Caco-2 (cell line): ENCODE measurements at regions of chr16 and their contacts with region 1.

Region 1: DNA sequence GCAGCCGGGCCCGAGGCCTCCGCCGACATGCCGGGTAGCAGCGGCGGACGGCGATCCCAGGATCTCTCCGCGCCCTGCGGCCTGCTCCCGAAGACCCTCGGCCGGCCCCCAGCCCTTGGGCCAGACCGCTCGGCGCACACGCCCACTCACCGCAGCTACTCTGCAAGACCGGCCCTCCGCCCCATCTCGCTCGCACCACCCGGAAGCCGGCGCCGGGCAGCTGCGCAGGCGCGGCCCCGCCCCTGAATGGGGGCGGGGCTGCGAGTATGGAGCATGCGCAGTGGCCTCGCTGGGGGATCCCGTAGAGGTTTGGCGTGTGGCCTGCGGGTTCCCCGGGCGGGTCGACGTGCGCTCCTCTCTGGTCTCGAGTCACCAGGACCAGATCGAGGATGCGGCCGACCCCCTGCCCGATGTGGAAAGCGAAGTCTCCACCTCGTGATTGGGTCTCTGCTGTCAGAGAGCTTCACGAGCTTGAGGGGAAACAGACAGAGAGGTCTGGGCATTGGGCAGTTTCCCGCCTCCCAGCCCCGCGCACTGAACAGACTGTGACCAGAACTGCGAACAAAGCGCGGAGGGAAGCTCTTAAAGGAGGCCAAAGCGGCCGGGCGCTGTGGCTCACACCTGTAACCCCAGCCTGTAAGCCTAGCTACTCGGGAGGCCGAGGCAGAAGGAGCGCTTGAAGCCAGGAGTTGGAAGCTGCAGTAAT is at the start of gene KCTD13:
- DNase-seq: peak; percentile 82 to 93
- H3K4me3 ChIP-seq: peak within 1 kb of the TSS; percentile 97
- H3K4me3 Mint-ChIP-seq: peak within 1 kb of the TSS; percentile 94
- H3K27ac Mint-ChIP-seq: peak within 1 kb of the TSS; percentile 89
- H3K4me1 ChIP-seq: peaks cover 15% of the 10 kb centered on the region
- H3K4me1 Mint-ChIP-seq: peaks cover 23% of the 10 kb centered on the region
- H3K27me3 ChIP-seq: no peaks in the 10 kb centered on the region
- H3K27me3 Mint-ChIP-seq: no peaks in the 10 kb centered on the region
- CTCF ChIP-seq: no peak
- total RNA-seq, gene KCTD13: 13.0 and 14.9 TPM in 2 replicates

Region 2: GRCh38 chr16:29862884-29863668 is 63.1 kb before region 1 on chr16 and contains the start of gene CDIPT:
- CTCF ChIA-PET with region 1: no interaction called
- POLR2A ChIA-PET with region 1: no interaction called
- intact Hi-C with region 1: loop called (anchors 2 kb)
- DNase-seq: peak; percentile 92 to 96
- H3K4me3 ChIP-seq: peak within 1 kb of the TSS; percentile 80
- H3K4me3 Mint-ChIP-seq: peak within 1 kb of the TSS; percentile 93
- H3K27ac Mint-ChIP-seq: peak within 1 kb of the TSS; percentile 100
- H3K4me1 ChIP-seq: peaks cover 6% of the 10 kb centered on the region; the same call in 1 of the 2 replicates
- H3K4me1 Mint-ChIP-seq: peaks cover 6% of the 10 kb centered on the region
- H3K27me3 ChIP-seq: no peaks in the 10 kb centered on the region
- H3K27me3 Mint-ChIP-seq: no peaks in the 10 kb centered on the region
- CTCF ChIP-seq: peak; percentile 13 to 66
- total RNA-seq, gene CDIPT: 56.6 and 57.1 TPM in 2 replicates

Region 3: GRCh38 chr16:29900102-29900887 is 25.9 kb before region 1 on chr16 and contains the start of gene ASPHD1:
- CTCF ChIA-PET with region 1: interaction called, 7 read pairs
- POLR2A ChIA-PET with region 1: interaction called, 12 read pairs
- intact Hi-C with region 1: no loop called
- DNase-seq: peak; percentile 73 to 83
- H3K4me3 ChIP-seq: peak within 1 kb of the TSS; percentile 66
- H3K4me3 Mint-ChIP-seq: peak within 1 kb of the TSS; percentile 93
- H3K27ac Mint-ChIP-seq: peak within 1 kb of the TSS; percentile 88
- H3K4me1 ChIP-seq: peaks cover 22% of the 10 kb centered on the region; the same call in 1 of the 2 replicates
- H3K4me1 Mint-ChIP-seq: peaks cover 22% of the 10 kb centered on the region
- H3K27me3 ChIP-seq: no peaks in the 10 kb centered on the region
- H3K27me3 Mint-ChIP-seq: no peaks in the 10 kb centered on the region
- CTCF ChIP-seq: no peak
- total RNA-seq, gene ASPHD1: 13.2 and 14.7 TPM in 2 replicates

Region 4: DNA sequence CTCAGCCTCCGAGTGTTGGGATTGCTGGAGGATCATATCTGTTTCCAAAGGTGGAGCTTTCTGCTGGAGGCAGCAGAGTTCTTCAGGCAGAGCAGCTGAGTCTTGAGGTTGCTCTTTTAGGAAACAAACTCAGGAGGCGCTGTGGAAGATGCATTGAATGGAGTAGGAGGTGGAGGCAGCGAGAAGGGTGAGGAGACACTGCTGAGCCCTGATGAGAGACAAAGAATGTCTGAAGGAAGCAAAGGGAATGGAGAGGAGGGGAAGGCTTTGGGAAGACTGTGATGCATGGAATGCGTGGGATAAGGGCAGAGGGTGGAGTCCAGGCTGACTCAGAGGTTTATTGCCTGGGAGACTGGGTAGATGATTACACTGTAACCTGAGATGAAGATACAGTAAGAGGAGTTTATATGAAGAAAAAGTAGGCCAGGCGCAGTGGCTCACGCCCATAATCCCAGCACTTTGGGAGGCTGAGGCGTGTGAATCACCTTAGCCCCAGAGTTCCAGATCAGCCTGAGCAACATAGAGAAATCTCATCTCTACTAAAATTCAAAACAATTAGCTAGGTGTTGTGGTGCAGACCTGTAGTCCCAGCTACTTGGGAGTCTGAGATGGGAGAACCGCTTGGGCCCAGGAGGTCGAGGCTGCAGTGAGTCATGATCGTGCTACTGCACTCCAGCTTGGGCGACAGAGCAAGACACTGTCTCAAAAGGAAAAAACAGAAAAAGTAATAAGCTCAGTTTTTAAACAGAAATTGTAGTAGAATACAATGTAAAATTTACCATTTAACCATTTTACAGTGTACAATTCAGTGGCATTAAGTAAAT is 17.9 kb after region 1 on chr16:
- CTCF ChIA-PET with region 1: interaction called, 10 read pairs
- POLR2A ChIA-PET with region 1: interaction called, 5 read pairs
- intact Hi-C with region 1: no loop called
- DNase-seq: peak; percentile 86 to 94
- H3K4me3 ChIP-seq: no peak overlapping the region
- H3K4me3 Mint-ChIP-seq: peak overlapping the region; percentile 45
- H3K27ac Mint-ChIP-seq: peak overlapping the region; percentile 74
- H3K4me1 ChIP-seq: peaks cover 31% of the 10 kb centered on the region
- H3K4me1 Mint-ChIP-seq: peaks cover 18% of the 10 kb centered on the region
- H3K27me3 ChIP-seq: no peaks in the 10 kb centered on the region
- H3K27me3 Mint-ChIP-seq: no peaks in the 10 kb centered on the region
- CTCF ChIP-seq: peak in 1 of 2 experiments; percentile 38

Region 5: DNA sequence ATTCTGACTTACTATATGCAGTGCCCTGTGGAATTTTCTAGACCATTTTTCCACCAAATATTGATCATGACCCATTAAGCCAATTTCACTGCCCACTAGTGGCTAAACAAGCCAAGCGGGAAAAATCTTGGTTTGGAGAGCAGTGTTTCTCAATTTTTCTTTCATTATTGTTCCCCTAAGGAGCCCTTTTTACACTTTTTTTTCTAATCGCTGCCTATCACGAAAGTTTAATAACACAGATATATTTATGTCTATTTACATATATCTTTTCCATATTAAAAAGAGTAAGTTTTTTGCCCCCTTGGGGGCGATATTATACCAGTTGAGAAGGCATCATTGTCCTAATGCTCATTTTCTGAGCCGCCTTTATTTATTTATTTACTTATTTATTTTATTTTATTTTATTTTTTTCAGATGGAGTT is 115.7 kb after region 1 on chr16:
- CTCF ChIA-PET with region 1: no interaction called
- POLR2A ChIA-PET with region 1: no interaction called
- intact Hi-C with region 1: no loop called
- DNase-seq: no peak
- H3K4me3 ChIP-seq: no peak overlapping the region
- H3K4me3 Mint-ChIP-seq: no peak overlapping the region
- H3K27ac Mint-ChIP-seq: no peak overlapping the region
- H3K4me1 ChIP-seq: no peaks in the 10 kb centered on the region
- H3K4me1 Mint-ChIP-seq: no peaks in the 10 kb centered on the region
- H3K27me3 ChIP-seq: no peaks in the 10 kb centered on the region
- H3K27me3 Mint-ChIP-seq: no peaks in the 10 kb centered on the region
- CTCF ChIP-seq: peak in 1 of 2 experiments; percentile 56